ENCODE measurements at regions of chr4 and their contacts with region 1.

Region 1: DNA sequence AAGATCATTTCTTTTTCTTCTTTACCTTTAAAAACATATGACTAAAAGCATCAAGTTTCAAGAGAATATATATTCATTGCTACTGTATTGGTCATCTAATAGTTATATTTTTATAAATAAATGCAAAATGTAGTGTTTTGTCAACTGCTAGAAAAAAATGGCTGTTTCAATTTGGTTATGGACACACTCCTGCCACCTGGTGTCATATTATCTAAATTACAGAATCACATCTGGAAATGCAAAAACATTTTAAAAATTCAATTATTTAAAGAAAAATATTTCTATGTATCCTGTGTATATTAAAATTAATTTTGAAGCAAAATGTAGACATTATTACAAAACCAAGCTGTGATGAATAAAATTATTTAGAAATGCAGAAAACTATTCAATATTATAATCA is 329.4 kb upstream of the PCDH18 start:
- DNase-seq: no peak
- H3K4me3 ChIP-seq: no peak overlapping the region
- H3K27ac ChIP-seq: no peak overlapping the region
- H3K4me1 ChIP-seq: no peaks in the 10 kb centered on the region
- H3K27me3 ChIP-seq: no peaks in the 10 kb centered on the region
- CTCF ChIP-seq: peak; percentile 16 to 60 (median 27)
- EP300 ChIP-seq: no peak
- POLR2A ChIP-seq: no peak

Region 2: DNA sequence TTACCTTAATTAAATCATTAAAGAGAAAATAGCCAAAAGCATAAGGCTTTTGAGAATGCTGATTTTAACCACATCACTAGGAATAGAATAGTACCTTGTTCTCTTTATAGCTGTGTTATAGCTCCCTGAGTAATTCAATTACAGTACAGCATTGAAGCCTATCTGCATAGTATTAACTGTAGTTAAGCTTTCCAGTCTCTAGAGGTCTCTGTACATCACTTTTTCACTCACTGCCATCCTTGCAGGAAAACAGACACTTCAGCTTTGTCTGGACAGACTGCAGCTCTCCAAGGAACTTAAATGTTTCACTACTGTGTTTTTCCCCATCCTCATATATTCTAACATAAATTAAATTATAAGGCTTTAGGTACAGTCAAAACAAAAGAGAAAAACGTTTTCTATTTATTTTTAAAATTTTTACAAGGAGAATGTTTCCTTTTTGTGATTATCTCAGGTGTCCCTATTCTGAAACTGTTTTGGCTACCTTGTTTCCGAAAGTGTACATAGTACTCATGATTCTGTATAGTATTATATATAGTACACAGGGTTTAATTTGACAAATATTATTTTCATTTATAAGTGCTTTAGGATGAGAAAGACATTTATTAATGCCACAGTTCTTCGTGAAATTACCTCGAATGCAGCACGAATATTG is 737.3 kb before region 1 on chr4:
- intact Hi-C with region 1: loop called in 1 of 4 experiments (anchors 5 kb)
- DNase-seq: no peak
- H3K4me3 ChIP-seq: peak overlapping the region; percentile 12
- H3K27ac ChIP-seq: no peak overlapping the region
- H3K4me1 ChIP-seq: no peaks in the 10 kb centered on the region
- H3K27me3 ChIP-seq: peaks cover 2% of the 10 kb centered on the region
- CTCF ChIP-seq: peak; percentile 42 to 53 (median 51)
- EP300 ChIP-seq: no peak
- POLR2A ChIP-seq: no peak

Measured in ovary (tissue), 10 donors.